Activated CD8-positive, alpha-beta T cell treated with anti-CD3 and anti-CD28 coated beads, Interleukin-2, amount 10 ng/mL, durations not matched to agents 7 days and 5 days (primary cell): ENCODE measurements at regions of chr11 and their contacts with region 1.

Region 1: DNA sequence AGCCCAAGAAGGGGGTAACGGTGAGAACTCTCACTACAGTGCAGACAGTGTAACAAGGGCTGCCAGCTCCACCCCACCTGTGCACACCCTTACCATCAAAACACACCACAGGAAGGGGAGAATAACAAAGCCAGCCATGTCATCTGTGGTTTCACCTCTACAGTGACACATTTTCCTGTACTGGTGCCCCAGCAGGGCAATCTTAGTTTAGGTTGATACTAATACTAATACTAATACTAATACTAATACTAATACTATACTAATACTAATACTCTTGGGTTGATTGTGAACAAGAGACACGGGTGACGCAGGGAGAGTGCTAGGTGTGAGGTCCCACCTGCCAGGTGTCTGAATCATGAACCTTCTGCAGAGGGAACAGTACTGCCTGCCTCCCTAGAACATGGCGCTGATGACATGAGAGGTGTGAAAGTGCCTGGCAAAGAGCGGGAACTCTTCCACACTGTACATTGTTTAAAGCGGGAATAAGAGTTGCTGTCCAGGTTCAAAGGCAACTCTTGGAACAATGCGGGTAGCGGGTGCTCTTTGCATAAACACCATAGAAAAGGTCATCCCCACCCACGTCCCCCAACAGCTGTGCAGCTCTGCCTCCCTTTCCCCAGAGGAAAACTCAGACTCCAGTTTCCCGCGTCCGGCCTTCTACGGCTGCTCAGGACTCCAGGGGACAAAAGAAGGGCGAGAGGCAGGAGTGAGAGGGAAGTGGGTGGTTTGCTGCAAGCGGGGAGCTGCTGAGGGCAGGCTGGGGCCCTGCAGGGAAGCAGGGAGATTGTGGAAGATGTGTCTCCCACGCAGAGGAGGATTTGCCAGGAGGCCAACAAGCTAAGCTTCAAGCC is 25.0 kb upstream of the TMPRSS4 start:
- DNase-seq: peak; percentile 86
- ATAC-seq: peak; percentile 91
- H3K4me3 Mint-ChIP-seq: peak overlapping the region; percentile 44
- H3K27ac Mint-ChIP-seq: peak overlapping the region; percentile 89
- H3K4me1 Mint-ChIP-seq: peaks cover 64% of the 10 kb centered on the region
- H3K27me3 Mint-ChIP-seq: peaks cover 2% of the 10 kb centered on the region

Region 2: GRCh38 chr11:117828611-117829368 is 223.0 kb before region 1 on chr11:
- CTCF ChIA-PET with region 1: interaction called, 119 read pairs
- POLR2A ChIA-PET with region 1: interaction called, 3 read pairs
- DNase-seq: peak; percentile 92
- ATAC-seq: peak; percentile 88
- H3K4me3 Mint-ChIP-seq: peak overlapping the region; percentile 48
- H3K27ac Mint-ChIP-seq: peak overlapping the region; percentile 90
- H3K4me1 Mint-ChIP-seq: peaks cover 83% of the 10 kb centered on the region
- H3K27me3 Mint-ChIP-seq: no peaks in the 10 kb centered on the region

Region 3: GRCh38 chr11:117932067-117932370 is 119.8 kb before region 1 on chr11:
- CTCF ChIA-PET with region 1: interaction called, 26 read pairs
- POLR2A ChIA-PET with region 1: no interaction called
- DNase-seq: peak; percentile 47
- ATAC-seq: no peak
- H3K4me3 Mint-ChIP-seq: no peak overlapping the region
- H3K27ac Mint-ChIP-seq: peak overlapping the region; percentile 93
- H3K4me1 Mint-ChIP-seq: peaks cover 83% of the 10 kb centered on the region
- H3K27me3 Mint-ChIP-seq: no peaks in the 10 kb centered on the region

Region 4: DNA sequence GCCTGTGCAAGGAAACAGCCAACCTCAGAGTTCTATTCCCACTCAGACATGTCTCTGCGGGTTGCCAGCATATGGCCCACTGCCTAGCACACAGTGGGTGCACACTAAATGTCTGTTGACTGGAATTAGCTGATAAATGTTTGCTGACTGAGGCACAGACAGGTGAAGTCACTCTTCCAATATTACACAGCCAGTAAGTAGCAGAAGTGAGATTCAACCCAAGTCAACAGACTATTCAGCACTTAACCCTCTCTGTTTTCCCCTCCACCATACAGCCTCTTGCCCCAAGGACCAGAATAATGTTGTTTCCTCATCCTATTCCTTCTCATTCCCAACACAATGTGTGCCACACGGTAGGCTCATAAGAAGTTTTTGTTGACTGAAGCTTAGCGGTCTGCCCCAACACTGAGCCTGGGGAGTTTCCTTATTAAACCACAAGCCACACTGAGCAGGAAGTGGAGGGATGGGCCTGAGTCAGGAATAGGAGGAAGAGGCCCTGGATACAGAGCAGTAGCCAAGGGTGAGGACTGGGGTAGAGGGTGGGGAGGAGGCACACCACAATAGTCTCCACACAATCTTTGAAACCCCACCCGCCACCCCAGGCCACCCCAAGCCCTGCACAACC is 81.3 kb before region 1 on chr11:
- CTCF ChIA-PET with region 1: interaction called, 71 read pairs
- POLR2A ChIA-PET with region 1: no interaction called
- DNase-seq: peak; percentile 56
- ATAC-seq: peak; percentile 59
- H3K4me3 Mint-ChIP-seq: no peak overlapping the region
- H3K27ac Mint-ChIP-seq: peak overlapping the region; percentile 47
- H3K4me1 Mint-ChIP-seq: peaks cover 66% of the 10 kb centered on the region
- H3K27me3 Mint-ChIP-seq: no peaks in the 10 kb centered on the region

Region 5: DNA sequence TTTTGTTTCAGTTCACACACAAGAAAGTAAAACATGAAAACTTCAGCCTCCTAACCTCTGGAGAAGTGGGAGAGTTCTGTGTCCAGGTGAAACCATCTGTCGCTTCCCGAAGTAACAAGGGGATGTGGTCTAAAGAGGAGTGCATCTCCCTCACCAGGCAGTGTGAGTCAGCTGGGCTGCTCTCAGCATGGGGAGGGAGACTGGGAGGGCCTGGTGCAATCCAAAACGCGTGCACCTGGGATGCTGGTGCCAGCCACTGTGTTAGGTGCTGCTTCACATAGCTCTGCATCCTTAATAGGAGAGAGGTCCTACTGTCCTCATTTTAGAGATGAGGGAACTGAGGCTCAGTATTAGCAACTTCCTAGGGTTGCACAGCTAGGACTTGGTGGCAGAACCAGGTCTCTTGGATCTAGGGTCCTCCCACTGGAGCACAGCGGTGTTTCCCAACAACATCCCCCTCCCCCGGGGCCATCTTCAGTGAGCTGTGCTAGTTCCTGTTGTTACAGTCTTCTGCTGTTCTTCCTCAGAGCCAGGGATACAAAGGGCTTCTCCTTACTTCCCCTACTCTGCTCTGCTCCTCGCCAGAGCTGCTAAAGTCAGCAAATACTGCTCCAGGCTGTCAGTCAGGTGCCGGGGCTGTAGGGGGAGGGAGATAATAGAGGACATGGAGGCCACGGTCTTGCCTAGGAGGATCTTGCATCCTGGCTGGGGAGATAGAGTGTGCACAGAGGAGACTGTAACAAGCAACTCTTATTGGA is 57.7 kb before region 1 on chr11:
- CTCF ChIA-PET with region 1: interaction called, 168 read pairs
- POLR2A ChIA-PET with region 1: interaction called, 112 read pairs
- DNase-seq: no peak
- ATAC-seq: no peak
- H3K4me3 Mint-ChIP-seq: peak overlapping the region; percentile 69
- H3K27ac Mint-ChIP-seq: peak overlapping the region; percentile 53
- H3K4me1 Mint-ChIP-seq: peaks cover 97% of the 10 kb centered on the region
- H3K27me3 Mint-ChIP-seq: no peaks in the 10 kb centered on the region

Region 6: GRCh38 chr11:118074785-118075184 is 22.9 kb after region 1 on chr11:
- CTCF ChIA-PET with region 1: interaction called, 21 read pairs
- POLR2A ChIA-PET with region 1: no interaction called
- DNase-seq: no peak
- ATAC-seq: no peak
- H3K4me3 Mint-ChIP-seq: no peak overlapping the region
- H3K27ac Mint-ChIP-seq: no peak overlapping the region
- H3K4me1 Mint-ChIP-seq: peaks cover 13% of the 10 kb centered on the region
- H3K27me3 Mint-ChIP-seq: peaks cover 11% of the 10 kb centered on the region